Activated B cell treated with CpG ODN at 0.5 μM for 24 hours (primary cell): ENCODE measurements at regions of chr2 and their contacts with region 1.

Region 1: DNA sequence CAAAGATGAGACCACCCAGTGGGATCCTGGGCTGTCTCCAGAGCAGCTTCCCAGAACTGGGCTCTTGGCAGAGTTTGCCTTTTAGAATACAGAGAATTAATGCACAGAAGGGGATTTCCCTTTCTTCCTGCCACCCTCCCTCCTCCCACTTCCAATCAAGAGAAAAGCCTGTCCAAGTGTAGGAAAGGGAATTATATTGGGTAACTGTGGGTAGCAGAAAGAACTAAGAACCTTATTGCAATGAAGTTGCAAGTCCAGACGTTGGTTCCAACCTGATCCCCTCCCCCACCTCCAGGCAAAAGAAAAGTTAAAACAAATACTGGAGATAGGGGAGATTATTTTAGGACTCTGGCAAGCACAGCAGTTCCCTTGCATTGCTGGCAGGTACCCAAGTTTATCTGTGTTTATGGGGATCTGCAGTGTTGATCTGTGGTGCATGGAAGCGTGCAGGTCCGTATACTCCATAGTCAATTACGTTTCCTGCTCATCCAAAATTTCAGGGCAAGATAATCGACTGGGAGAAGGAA is 114.3 kb downstream of the PRKCE start:
- DNase-seq: no peak
- ATAC-seq: no peak
- H3K4me3 Mint-ChIP-seq: no peak overlapping the region
- H3K27ac Mint-ChIP-seq: peak overlapping the region; percentile 48
- H3K4me1 Mint-ChIP-seq: peaks cover 77% of the 10 kb centered on the region
- H3K27me3 Mint-ChIP-seq: no peaks in the 10 kb centered on the region
- CTCF ChIP-seq: no peak

Region 2: GRCh38 chr2:45748239-45748638 is 17.6 kb before region 1 on chr2:
- CTCF ChIA-PET with region 1: interaction called, 3 read pairs
- POLR2A ChIA-PET with region 1: no interaction called
- intact Hi-C with region 1: loop called (anchors 2 kb)
- DNase-seq: no peak
- ATAC-seq: no peak
- H3K4me3 Mint-ChIP-seq: no peak overlapping the region
- H3K27ac Mint-ChIP-seq: no peak overlapping the region
- H3K4me1 Mint-ChIP-seq: peaks cover 64% of the 10 kb centered on the region
- H3K27me3 Mint-ChIP-seq: no peaks in the 10 kb centered on the region
- CTCF ChIP-seq: no peak

Region 3: GRCh38 chr2:46171411-46171953 is 405.7 kb after region 1 on chr2:
- CTCF ChIA-PET with region 1: no interaction called
- POLR2A ChIA-PET with region 1: no interaction called
- intact Hi-C with region 1: no loop called
- DNase-seq: no peak
- ATAC-seq: no peak
- H3K4me3 Mint-ChIP-seq: no peak overlapping the region
- H3K27ac Mint-ChIP-seq: no peak overlapping the region
- H3K4me1 Mint-ChIP-seq: no peaks in the 10 kb centered on the region
- H3K27me3 Mint-ChIP-seq: no peaks in the 10 kb centered on the region
- CTCF ChIP-seq: no peak